Common myeloid progenitor, CD34-positive (primary cell): ENCODE measurements at regions of chr1 and their contacts with region 1.

Region 1: DNA sequence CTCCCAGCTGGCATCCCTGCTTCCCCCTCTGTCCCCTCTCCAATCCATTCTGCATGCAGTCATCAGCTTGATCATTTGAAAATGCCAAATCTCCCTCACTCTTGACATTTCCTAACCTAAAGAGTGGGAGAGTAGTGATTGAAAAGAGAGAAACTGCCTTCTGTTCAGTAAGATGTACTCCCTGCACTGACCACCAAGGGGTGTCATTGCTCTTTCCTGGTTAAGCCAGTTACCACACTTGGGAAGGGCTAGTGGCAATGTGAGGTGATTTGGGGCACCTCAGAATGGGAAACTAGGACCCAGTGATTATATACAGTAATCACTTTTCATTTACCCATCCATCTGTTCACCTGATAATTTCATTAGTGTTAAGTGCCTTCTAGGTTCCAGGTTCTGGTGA is 6.9 kb upstream of the TMEM269 start:
- DNase-seq: peak in 2 of 3 donors; percentile 52 to 61
- H3K4me3 ChIP-seq: no peak overlapping the region
- H3K27ac ChIP-seq: no peak overlapping the region
- H3K4me1 ChIP-seq: no peaks in the 10 kb centered on the region
- H3K27me3 ChIP-seq: no peaks in the 10 kb centered on the region

Region 2: DNA sequence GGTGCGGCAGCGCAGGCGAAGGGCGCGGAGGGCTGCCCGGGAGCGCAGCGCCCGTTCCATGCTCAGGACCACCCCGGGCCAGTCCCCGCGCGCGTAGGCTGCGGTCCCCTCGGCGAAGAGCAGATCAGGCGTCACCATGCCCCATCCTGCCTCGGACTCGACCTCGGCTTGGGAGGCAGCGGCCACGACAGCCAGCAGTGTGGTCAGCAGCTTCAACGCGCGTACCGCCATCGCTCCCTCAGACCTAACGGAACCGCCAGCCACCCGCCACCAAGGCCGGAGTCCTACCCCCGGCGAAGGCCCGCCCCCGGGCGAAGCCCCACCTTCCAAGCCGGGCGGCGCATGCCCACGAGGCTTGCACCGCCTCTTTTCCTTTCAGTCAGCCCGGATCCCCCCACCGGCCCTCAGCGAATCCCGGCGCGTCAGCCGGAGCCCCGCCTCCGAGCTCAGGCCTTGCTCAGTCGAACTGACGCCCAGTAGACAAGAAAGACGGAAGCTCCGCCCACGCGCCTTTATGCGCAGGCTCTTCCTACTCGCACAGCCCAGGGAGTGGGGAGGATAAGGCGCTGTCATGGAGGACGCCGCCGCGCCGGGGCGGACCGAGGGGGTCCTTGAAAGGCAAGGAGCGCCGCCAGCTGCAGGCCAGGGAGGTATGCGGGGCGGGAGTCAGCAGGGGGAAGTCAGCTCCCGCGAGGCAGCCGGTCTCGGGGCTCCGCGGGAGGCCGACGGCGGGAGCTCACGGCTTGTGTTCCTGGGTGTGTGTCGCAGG is 10.9 kb before region 1 on chr1 and contains the starts of genes C1orf50 and P3H1:
- CTCF ChIA-PET with region 1: interaction called, 28 read pairs
- POLR2A ChIA-PET with region 1: no interaction called
- DNase-seq: peak; percentile 99 to 100 (median 100)
- H3K4me3 ChIP-seq: peak within 1 kb of the TSS; percentile 81 to 98 (median 96)
- H3K27ac ChIP-seq: peak within 1 kb of the TSS; percentile 64 to 90
- H3K4me1 ChIP-seq: peaks cover 26 to 38% (median 33%) of the 10 kb centered on the region in 4 experiments
- H3K27me3 ChIP-seq: no peaks in the 10 kb centered on the region

Region 3: DNA sequence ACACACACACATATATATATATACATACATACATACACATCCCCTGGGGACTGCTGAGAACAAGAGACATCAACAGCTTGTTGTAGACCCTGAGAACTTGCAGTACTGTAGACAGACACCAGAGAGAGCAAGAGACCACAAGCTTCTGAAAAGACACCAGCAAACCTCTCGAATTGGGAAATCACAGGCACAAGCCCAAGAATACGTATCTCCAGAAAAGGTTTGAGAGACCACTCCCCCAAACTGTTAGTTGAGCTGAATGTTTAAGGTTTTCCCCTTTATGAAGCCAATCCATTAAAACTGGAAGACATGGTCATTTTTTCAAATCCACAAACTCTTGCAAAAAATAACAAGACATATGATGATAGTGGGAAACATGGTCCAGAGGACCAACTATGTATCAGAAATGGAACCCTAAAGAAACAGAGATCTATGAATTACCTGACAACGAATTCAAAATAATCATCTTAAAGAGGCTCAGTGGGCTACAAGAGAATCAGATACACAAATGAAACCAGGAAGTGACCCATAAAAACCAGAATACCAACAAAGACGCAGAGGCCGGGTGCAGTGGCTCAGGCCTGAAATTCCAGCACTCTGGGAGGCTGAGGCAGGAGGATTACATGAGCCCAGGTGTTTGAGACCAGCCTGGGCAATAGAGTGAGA is 135.7 kb after region 1 on chr1:
- CTCF ChIA-PET with region 1: interaction called, 24 read pairs
- POLR2A ChIA-PET with region 1: no interaction called
- DNase-seq: peak; percentile 85 to 92 (median 85)
- H3K4me3 ChIP-seq: no peak overlapping the region
- H3K27ac ChIP-seq: no peak overlapping the region
- H3K4me1 ChIP-seq: peaks cover 0 to 12% (median 4%) of the 10 kb centered on the region in 4 experiments
- H3K27me3 ChIP-seq: no peaks in the 10 kb centered on the region

Region 4: DNA sequence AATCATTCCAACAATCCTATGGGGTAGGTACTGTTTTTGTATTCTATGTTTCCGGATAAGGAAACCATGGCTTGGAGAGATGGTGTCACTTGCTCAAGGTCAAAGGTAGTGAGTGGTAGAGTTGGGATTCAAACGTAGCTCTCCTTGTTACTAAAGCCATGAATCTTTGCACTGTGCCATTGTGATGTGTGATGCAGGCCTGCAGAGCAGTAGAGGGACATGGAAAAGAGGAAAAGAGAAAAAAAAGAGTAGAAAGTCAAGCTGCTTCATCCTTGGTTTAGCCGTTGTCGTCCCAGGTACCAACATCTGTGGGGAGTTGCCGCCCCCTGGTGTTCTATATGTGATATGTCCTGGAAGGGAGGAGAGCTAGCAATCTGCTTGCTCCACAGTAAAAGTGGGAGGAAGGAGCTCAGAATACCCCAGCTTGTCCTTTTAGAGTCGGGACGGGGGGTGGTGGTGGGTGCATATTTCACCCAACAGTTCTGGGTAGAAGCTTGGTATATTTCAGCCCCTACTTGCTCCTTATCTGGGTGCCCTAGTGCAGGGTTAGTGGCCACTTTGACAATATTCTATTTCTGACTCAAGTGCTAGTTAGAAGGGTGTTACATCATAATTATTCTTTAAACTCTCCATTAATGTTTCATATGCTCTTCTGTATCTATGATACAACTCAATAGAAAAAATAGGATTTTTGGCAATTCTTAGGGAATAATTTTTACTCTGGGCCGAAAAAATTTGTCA is 295.8 kb after region 1 on chr1:
- CTCF ChIA-PET with region 1: interaction called, 106 read pairs
- POLR2A ChIA-PET with region 1: no interaction called
- DNase-seq: peak; percentile 63 to 81 (median 74)
- H3K4me3 ChIP-seq: no peak overlapping the region
- H3K27ac ChIP-seq: no peak overlapping the region
- H3K4me1 ChIP-seq: peaks cover 0 to 6% (median 5%) of the 10 kb centered on the region in 4 experiments
- H3K27me3 ChIP-seq: no peaks in the 10 kb centered on the region